ENCODE measurements at regions of chr7 and their contacts with region 1.

Region 1: DNA sequence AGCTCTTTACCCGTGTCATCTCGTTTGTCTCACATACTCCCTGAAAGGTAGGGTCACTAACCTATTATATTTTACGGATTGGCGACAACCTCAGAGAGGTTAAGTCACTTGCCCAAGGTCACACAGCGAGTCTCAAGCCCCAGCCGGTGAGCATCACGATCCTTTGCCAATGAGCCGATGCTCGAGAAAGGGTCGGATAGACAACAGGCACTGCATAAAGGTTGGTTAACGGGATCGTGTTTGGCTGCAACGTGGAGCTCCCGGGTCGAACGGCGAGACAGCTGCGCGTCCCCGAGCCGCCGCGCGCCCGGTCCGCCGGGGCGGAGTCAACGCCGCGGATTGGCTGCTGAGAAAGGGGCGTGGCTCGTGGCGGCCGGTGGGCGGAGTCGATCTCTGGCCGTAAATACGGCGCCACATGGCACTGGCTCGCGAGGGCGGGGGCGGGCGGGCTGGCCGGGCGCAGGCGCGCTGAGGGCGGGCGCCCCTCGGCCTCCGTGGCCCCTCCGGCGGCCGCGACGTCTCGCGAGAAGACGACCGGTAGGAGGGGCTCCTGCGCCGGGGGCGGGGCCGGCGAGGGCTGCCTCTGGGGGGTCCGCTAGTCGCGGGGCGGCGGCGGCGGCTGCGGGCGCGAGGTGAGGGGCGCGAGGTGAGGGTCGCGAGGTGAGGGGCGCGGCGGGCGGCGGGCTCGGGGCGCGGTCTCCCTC is at the start of gene CHST12:
- DNase-seq: peak; percentile 87 to 99 (median 94)
- ATAC-seq: peak; percentile 78
- H3K4me3 ChIP-seq: peak within 1 kb of the TSS; percentile 84
- H3K4me3 Mint-ChIP-seq: peak within 1 kb of the TSS; percentile 84
- H3K27ac ChIP-seq: peak within 1 kb of the TSS; percentile 49 to 66
- H3K27ac Mint-ChIP-seq: peak within 1 kb of the TSS; percentile 88
- H3K4me1 ChIP-seq: peaks cover 53% of the 10 kb centered on the region
- H3K4me1 Mint-ChIP-seq: peaks cover 50% of the 10 kb centered on the region
- H3K27me3 ChIP-seq: no peaks in the 10 kb centered on the region
- H3K27me3 Mint-ChIP-seq: no peaks in the 10 kb centered on the region
- CTCF ChIP-seq: no peak
- total RNA-seq, gene CHST12: 10.3 to 11.7 TPM

Region 2: DNA sequence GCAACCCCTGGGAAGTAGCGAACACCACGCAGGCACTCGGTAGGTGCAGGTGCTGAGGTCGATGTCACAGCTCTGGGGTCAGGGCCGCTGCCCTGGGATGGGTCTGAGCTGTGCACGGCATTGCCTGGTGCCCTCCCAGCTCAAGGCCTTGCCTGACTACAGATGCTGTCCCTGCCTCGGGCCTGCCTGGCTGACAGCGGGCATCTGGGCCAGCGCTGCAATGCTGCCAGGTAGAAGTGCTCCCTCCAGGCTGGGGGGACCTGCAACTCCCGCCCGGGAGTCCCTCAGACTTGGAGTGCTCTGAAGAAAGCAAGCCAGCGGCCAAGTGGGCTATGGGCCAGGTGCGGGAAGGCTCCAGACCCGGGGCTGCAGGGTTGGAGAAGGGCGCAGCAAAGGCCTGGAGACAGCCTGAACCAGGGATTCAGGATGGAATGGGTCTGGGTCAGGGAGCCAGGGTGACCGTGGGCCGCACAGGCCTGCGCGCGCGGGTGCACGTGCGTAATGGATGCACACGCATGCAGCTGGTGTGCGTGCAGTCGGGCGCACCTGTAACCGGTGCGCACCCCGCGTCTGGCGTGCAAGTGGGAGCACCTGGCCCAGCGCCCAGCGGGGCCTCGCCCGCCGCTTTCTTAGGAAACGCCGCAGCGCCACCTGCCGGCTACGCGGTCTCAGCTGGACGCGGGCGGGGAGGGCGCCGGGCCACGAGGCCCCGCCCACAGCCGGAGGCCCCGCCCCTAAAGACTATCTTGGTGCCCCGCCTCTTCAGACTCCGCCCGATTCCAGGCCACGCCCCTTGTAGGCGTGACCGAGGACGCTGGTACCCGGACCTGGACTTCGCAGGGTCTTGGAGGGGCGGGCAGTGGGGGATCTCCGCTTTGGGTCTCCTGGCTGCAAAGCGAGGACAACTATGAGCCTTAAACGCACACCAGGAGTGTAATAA is 990.6 kb before region 1 on chr7:
- CTCF ChIA-PET with region 1: no interaction called
- POLR2A ChIA-PET with region 1: no interaction called
- intact Hi-C with region 1: loop called in 1 of 2 experiments (anchors 2 kb)
- DNase-seq: peak; percentile 80 to 97 (median 89)
- ATAC-seq: peak; percentile 91
- H3K4me3 ChIP-seq: peak overlapping the region; percentile 23 to 30
- H3K4me3 Mint-ChIP-seq: peak overlapping the region; percentile 61
- H3K27ac ChIP-seq: peak overlapping the region in 1 of 2 experiments; percentile 22
- H3K27ac Mint-ChIP-seq: no peak overlapping the region
- H3K4me1 ChIP-seq: peaks cover 24% of the 10 kb centered on the region
- H3K4me1 Mint-ChIP-seq: peaks cover 13% of the 10 kb centered on the region
- H3K27me3 ChIP-seq: peaks cover 0 to 3% of the 10 kb centered on the region in 2 experiments
- H3K27me3 Mint-ChIP-seq: peaks cover 6% of the 10 kb centered on the region
- CTCF ChIP-seq: peak; percentile 81

Region 3: GRCh38 chr7:2232766-2233520 is 170.2 kb before region 1 on chr7 and contains the start of gene MAD1L1:
- CTCF ChIA-PET with region 1: no interaction called
- POLR2A ChIA-PET with region 1: no interaction called
- intact Hi-C with region 1: loop called (anchors 2 to 5 kb)
- DNase-seq: peak; percentile 77 to 93 (median 88)
- ATAC-seq: peak; percentile 93
- H3K4me3 ChIP-seq: peak within 1 kb of the TSS; percentile 63 to 96
- H3K4me3 Mint-ChIP-seq: peak within 1 kb of the TSS; percentile 94
- H3K27ac ChIP-seq: peak within 1 kb of the TSS; percentile 33 to 61
- H3K27ac Mint-ChIP-seq: peak within 1 kb of the TSS; percentile 83
- H3K4me1 ChIP-seq: peaks cover 24% of the 10 kb centered on the region
- H3K4me1 Mint-ChIP-seq: peaks cover 34% of the 10 kb centered on the region
- H3K27me3 ChIP-seq: no peaks in the 10 kb centered on the region
- H3K27me3 Mint-ChIP-seq: no peaks in the 10 kb centered on the region
- CTCF ChIP-seq: no peak
- total RNA-seq, gene MAD1L1: 88.7 to 91.0 TPM

Region 4: GRCh38 chr7:2255145-2256139 is 147.7 kb before region 1 on chr7:
- CTCF ChIA-PET with region 1: no interaction called
- POLR2A ChIA-PET with region 1: no interaction called
- intact Hi-C with region 1: no loop called
- DNase-seq: no peak
- ATAC-seq: no peak
- H3K4me3 ChIP-seq: no peak overlapping the region
- H3K4me3 Mint-ChIP-seq: no peak overlapping the region
- H3K27ac ChIP-seq: no peak overlapping the region
- H3K27ac Mint-ChIP-seq: no peak overlapping the region
- H3K4me1 ChIP-seq: no peaks in the 10 kb centered on the region
- H3K4me1 Mint-ChIP-seq: peaks cover 10% of the 10 kb centered on the region
- H3K27me3 ChIP-seq: no peaks in the 10 kb centered on the region
- H3K27me3 Mint-ChIP-seq: no peaks in the 10 kb centered on the region
- CTCF ChIP-seq: no peak

Region 5: GRCh38 chr7:2417981-2418481 is 14.9 kb after region 1 on chr7:
- CTCF ChIA-PET with region 1: interaction called, 8 read pairs
- POLR2A ChIA-PET with region 1: interaction called, 4 read pairs
- intact Hi-C with region 1: loop called in 1 of 2 experiments (anchors 2 kb)
- DNase-seq: peak; percentile 30 to 92 (median 57)
- ATAC-seq: peak; percentile 85
- H3K4me3 ChIP-seq: peak overlapping the region in 1 of 2 experiments; percentile 2
- H3K4me3 Mint-ChIP-seq: peak overlapping the region; percentile 47
- H3K27ac ChIP-seq: peak overlapping the region; percentile 19 to 70
- H3K27ac Mint-ChIP-seq: peak overlapping the region; percentile 84
- H3K4me1 ChIP-seq: peaks cover 17% of the 10 kb centered on the region
- H3K4me1 Mint-ChIP-seq: peaks cover 43% of the 10 kb centered on the region
- H3K27me3 ChIP-seq: no peaks in the 10 kb centered on the region
- H3K27me3 Mint-ChIP-seq: no peaks in the 10 kb centered on the region
- CTCF ChIP-seq: no peak

Region 6: DNA sequence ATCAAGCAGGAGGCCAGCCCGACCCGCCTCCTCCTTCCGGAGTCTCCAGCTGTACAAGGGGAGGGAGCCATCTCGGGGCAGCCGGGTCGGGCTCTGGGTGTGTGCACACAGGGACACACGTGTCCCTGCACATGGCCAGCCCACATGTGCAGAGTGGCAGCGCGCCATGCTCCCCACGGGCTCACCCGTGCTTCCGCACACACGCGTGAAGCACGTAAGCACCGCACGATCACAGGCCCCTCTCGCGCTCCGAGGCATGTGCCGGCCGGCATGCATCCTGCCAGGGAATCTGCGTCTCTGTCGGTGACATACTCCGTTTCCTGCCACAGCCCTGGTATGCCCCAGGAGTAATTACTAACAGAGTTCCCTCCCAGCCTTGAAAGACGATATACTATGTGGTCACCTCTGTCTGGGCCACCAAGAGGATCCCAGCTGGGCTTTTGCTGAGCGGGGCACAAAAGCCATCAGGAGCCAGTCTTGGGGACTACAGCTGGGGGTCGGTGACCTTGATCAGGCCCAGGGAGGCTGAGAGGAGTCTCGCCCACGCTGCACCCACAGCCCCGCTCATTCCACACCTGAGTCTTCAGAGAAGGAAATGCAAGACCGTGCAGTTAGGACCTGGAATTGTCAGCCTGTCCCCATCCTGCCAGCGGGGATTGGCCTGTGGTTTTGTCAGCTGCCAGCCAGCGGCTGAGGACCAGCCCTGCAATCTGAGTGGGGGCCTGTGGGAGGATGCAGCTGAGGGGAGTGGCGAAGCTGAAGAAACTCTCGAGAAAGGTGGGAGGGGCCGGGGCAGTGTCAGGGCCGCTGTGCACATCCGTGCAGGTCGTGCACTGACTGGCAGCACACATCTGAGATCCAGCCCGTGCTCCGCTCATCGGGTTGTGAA is 105.4 kb after region 1 on chr7:
- CTCF ChIA-PET with region 1: interaction called, 3 read pairs
- POLR2A ChIA-PET with region 1: no interaction called
- intact Hi-C with region 1: loop called (anchors 2 kb)
- DNase-seq: peak; percentile 56 to 95 (median 84)
- ATAC-seq: peak; percentile 67
- H3K4me3 ChIP-seq: peak overlapping the region; percentile 27 to 47
- H3K4me3 Mint-ChIP-seq: peak overlapping the region; percentile 74
- H3K27ac ChIP-seq: peak overlapping the region; percentile 84 to 88
- H3K27ac Mint-ChIP-seq: peak overlapping the region; percentile 97
- H3K4me1 ChIP-seq: peaks cover 67% of the 10 kb centered on the region
- H3K4me1 Mint-ChIP-seq: peaks cover 64% of the 10 kb centered on the region
- H3K27me3 ChIP-seq: no peaks in the 10 kb centered on the region
- H3K27me3 Mint-ChIP-seq: no peaks in the 10 kb centered on the region
- CTCF ChIP-seq: no peak